ENCODE measurements at regions of chr20 and their contacts with region 1.

Region 1: DNA sequence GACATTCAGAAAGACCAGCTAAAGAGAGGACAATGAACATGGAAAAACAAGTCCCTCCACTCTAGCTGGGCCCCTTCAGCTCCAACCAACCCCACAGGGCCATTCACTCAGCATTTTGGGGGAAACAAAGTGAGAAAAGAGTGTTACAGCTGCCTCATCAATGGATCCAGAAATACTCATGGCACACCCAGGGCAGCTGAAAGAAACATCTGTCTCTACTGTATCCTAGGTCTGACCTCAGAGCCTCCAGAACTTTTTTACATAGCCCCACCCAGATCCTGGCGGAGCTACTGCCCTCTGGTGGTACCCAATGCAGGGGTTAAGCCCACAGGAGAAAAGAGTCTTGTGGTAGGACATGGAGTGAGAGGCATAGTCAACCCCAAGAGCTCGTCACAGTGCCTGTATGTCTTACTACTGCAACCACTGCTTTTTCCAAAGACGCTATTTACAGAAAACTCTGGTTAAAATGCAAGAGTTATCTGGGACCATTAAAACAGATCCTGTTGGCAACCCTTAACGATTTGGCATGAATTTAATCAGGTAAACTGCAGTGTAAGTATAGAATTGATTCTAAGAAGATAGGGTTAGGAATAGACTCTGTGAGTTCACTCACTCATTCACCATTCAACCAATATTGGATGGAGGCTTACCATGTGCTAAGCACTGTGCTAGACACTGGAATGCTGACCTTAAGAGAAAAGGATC is 37.4 kb upstream of the FAM83C start:
- DNase-seq: peak; percentile 62
- H3K4me3 Mint-ChIP-seq: no peak overlapping the region
- H3K27ac Mint-ChIP-seq: no peak overlapping the region
- H3K4me1 Mint-ChIP-seq: no peaks in the 10 kb centered on the region
- H3K27me3 Mint-ChIP-seq: no peaks in the 10 kb centered on the region

Region 2: DNA sequence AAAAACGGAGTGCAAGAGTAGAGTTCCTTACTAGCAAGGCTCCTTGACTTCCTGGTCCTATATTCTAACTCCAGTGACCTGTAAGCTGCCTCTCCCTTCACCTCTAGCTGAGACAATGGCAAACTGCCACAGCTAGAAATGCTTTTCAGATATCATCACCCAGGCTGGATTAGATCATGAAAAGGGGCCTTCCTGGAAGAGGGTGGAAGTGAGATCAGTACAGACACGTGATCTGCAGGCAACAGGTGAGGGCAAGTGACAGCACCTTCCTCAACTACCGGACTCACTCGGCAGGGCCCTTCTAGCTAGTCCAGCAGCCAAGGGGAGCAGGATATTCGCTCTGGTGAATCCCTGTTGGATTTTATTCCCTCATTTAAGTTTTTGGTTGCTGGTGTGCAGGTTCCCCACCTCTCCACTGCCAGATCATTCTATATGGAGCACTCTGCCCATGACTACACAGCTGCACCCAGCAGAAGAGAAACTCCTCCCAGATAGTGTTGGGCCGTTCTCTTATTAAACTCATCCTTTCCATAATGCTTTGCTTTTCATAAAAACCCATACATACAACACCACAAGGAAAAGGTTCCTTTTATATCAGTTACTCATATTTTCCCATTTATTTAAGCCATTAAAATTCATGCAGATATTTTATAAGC is 11.0 kb before region 1 on chr20:
- CTCF ChIA-PET with region 1: interaction called, 18 read pairs
- DNase-seq: no peak
- H3K4me3 Mint-ChIP-seq: no peak overlapping the region
- H3K27ac Mint-ChIP-seq: peak overlapping the region; percentile 42
- H3K4me1 Mint-ChIP-seq: peaks cover 34% of the 10 kb centered on the region
- H3K27me3 Mint-ChIP-seq: no peaks in the 10 kb centered on the region

Measured in activated naive CD4-positive, alpha-beta T cell treated with anti-CD3 and anti-CD28 coated beads, Interleukin-2, amount 10 ng/mL, durations not matched to agents 7 days and 5 days (primary cell).